ENCODE measurements at regions of chr20 and their contacts with region 1.

Region 1: DNA sequence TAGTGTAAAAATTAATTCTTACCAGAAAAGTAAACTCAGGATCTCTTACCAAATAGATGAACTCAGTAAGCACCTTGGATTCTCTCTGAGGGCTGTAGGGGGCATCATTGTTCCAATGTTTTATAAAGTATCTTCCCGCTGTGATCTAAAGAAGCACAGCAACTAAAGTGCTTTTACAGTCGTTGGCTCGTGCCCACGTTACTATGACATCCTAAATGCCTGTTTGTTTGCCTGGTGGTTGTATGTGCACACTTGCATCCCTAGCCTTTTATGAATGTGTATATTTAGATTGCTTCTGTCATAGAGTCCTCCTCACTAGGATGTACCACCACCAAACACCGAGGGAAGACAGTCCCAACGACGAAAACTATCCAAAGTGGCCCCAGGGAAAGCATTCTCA is 34.5 kb downstream of the SLX4IP start:
- DNase-seq: peak; percentile 31
- ATAC-seq: peak; percentile 64
- H3K4me3 Mint-ChIP-seq: no peak overlapping the region
- H3K27ac Mint-ChIP-seq: no peak overlapping the region
- H3K4me1 Mint-ChIP-seq: peaks cover 5% of the 10 kb centered on the region
- H3K27me3 Mint-ChIP-seq: no peaks in the 10 kb centered on the region

Region 2: GRCh38 chr20:9789131-9789530 is 680.5 kb before region 1 on chr20:
- CTCF ChIA-PET with region 1: no interaction called
- POLR2A ChIA-PET with region 1: no interaction called
- intact Hi-C with region 1: no loop called
- DNase-seq: no peak
- ATAC-seq: no peak
- H3K4me3 Mint-ChIP-seq: no peak overlapping the region
- H3K27ac Mint-ChIP-seq: no peak overlapping the region
- H3K4me1 Mint-ChIP-seq: no peaks in the 10 kb centered on the region
- H3K27me3 Mint-ChIP-seq: no peaks in the 10 kb centered on the region

Region 3: DNA sequence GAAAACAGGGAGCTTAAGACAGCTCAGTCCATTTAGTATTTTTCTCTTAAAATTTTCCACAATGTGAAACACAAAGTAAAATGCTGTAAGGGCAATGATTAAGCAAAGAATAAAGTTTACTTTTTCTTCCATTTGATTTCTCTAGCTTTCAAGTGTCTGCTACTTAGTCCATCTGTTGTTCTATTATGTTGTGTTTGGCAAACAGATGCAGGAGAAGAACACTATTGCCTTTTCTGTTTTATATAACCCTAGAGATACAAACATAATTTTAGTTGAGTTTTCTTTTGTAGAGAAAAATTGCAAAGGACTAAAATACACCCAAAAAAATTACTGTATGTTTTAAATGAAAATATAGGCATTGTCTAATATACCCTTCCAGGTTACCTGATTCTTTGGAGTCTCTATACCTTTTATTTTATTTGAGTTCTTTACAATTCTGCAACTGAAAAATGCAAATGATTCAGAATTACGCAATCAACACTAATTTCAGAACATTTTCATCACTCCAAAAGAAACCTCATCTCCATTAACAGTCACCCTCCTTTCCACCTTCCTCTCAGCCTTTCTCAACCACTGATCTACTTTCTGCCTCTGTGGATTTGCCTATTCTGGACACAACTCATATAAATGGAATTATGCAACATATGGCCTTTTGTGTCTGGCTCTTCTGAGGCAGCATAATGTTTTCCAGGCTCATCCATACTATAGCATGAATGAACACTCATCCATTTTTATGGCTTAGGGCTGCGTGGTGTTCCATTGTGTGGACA is 132.5 kb before region 1 on chr20:
- CTCF ChIA-PET with region 1: no interaction called
- POLR2A ChIA-PET with region 1: no interaction called
- intact Hi-C with region 1: no loop called
- DNase-seq: no peak
- ATAC-seq: peak; percentile 30
- H3K4me3 Mint-ChIP-seq: no peak overlapping the region
- H3K27ac Mint-ChIP-seq: no peak overlapping the region
- H3K4me1 Mint-ChIP-seq: peaks cover 9% of the 10 kb centered on the region
- H3K27me3 Mint-ChIP-seq: peaks cover 18% of the 10 kb centered on the region

Region 4: GRCh38 chr20:10453241-10453640 is 16.4 kb before region 1 on chr20:
- CTCF ChIA-PET with region 1: no interaction called
- POLR2A ChIA-PET with region 1: no interaction called
- intact Hi-C with region 1: no loop called
- DNase-seq: peak; percentile 54
- ATAC-seq: peak; percentile 71
- H3K4me3 Mint-ChIP-seq: peak overlapping the region; percentile 0
- H3K27ac Mint-ChIP-seq: peak overlapping the region; percentile 22
- H3K4me1 Mint-ChIP-seq: peaks cover 20% of the 10 kb centered on the region
- H3K27me3 Mint-ChIP-seq: no peaks in the 10 kb centered on the region

Region 5: GRCh38 chr20:10536531-10536930 is 66.9 kb after region 1 on chr20:
- CTCF ChIA-PET with region 1: interaction called, 4 read pairs
- POLR2A ChIA-PET with region 1: no interaction called
- intact Hi-C with region 1: loop called in 1 of 2 experiments (anchors 1 kb)
- DNase-seq: peak; percentile 51
- ATAC-seq: peak; percentile 30
- H3K4me3 Mint-ChIP-seq: no peak overlapping the region
- H3K27ac Mint-ChIP-seq: no peak overlapping the region
- H3K4me1 Mint-ChIP-seq: peaks cover 17% of the 10 kb centered on the region
- H3K27me3 Mint-ChIP-seq: no peaks in the 10 kb centered on the region

Region 6: GRCh38 chr20:11544029-11544678 is 1074.6 kb after region 1 on chr20:
- CTCF ChIA-PET with region 1: no interaction called
- POLR2A ChIA-PET with region 1: no interaction called
- intact Hi-C with region 1: loop called in 1 of 2 experiments (anchors 5 kb)
- DNase-seq: peak; percentile 25
- ATAC-seq: no peak
- H3K4me3 Mint-ChIP-seq: no peak overlapping the region
- H3K27ac Mint-ChIP-seq: no peak overlapping the region
- H3K4me1 Mint-ChIP-seq: no peaks in the 10 kb centered on the region
- H3K27me3 Mint-ChIP-seq: no peaks in the 10 kb centered on the region